Activated CD4-positive, alpha-beta memory T cell treated with anti-CD3 and anti-CD28 coated beads, Interleukin-2, amount 10 ng/mL, durations not matched to agents 7 days and 5 days (primary cell): ENCODE measurements at regions of chr10 and their contacts with region 1.

Region 1: GRCh38 chr10:30999070-30999712 is 32.5 kb downstream of the ZNF438 start:
- DNase-seq: peak; percentile 22
- H3K4me3 Mint-ChIP-seq: peak overlapping the region; percentile 74
- H3K27ac Mint-ChIP-seq: peak overlapping the region; percentile 80
- H3K4me1 Mint-ChIP-seq: peaks cover 46% of the 10 kb centered on the region
- H3K27me3 Mint-ChIP-seq: no peaks in the 10 kb centered on the region

Region 2: DNA sequence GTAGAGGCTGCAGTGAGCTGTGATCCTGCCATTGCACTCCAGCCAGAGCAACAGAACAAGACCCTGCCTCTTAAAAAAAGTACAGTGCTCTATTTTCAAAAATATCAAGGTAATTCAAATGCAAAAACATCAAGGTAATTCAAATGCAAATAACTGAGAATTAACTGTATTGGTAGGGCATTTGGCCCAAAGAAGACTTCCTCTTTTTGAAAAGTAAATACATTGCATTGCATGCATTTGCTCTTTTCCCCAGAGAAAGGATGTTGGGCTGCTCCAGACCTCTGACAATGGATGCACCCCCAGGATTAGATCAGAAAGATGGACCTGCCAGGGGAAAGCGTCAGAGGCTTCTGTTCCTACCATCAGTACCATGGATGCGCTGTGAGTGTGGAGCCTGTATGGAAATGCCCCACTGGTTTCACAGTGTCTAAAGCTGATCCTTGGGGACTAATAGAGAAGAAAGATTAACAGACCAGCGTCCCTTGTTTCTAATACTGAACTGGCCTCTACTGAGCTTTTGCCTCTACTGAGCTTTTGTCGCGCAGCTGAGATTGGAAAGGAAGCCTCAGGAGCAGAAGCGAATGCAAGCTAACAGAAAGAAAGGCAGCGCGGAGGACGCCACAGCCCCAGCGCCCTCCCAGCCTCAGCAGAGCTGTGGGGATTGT is 276.1 kb before region 1 on chr10:
- CTCF ChIA-PET with region 1: no interaction called
- POLR2A ChIA-PET with region 1: no interaction called
- DNase-seq: no peak
- H3K4me3 Mint-ChIP-seq: no peak overlapping the region
- H3K27ac Mint-ChIP-seq: no peak overlapping the region
- H3K4me1 Mint-ChIP-seq: peaks cover 34% of the 10 kb centered on the region
- H3K27me3 Mint-ChIP-seq: no peaks in the 10 kb centered on the region

Region 3: GRCh38 chr10:30928742-30929141 is 70.4 kb before region 1 on chr10:
- CTCF ChIA-PET with region 1: no interaction called
- POLR2A ChIA-PET with region 1: no interaction called
- DNase-seq: no peak
- H3K4me3 Mint-ChIP-seq: no peak overlapping the region
- H3K27ac Mint-ChIP-seq: no peak overlapping the region
- H3K4me1 Mint-ChIP-seq: peaks cover 10% of the 10 kb centered on the region
- H3K27me3 Mint-ChIP-seq: no peaks in the 10 kb centered on the region

Region 4: GRCh38 chr10:30986053-30986555 is 13.1 kb before region 1 on chr10:
- CTCF ChIA-PET with region 1: interaction called, 4 read pairs
- POLR2A ChIA-PET with region 1: interaction called, 28 read pairs
- DNase-seq: no peak
- H3K4me3 Mint-ChIP-seq: peak overlapping the region; percentile 33
- H3K27ac Mint-ChIP-seq: peak overlapping the region; percentile 88
- H3K4me1 Mint-ChIP-seq: peaks cover 31% of the 10 kb centered on the region
- H3K27me3 Mint-ChIP-seq: no peaks in the 10 kb centered on the region